ENCODE measurements at regions of chr1 and their contacts with region 1.

Region 1: GRCh38 chr1:235504496-235505222 is 407 bp upstream of the B3GALNT2 start:
- DNase-seq: peak; percentile 95 to 99 (median 98)
- ATAC-seq: peak; percentile 93
- H3K4me3 ChIP-seq: peak overlapping the region; percentile 93
- H3K4me3 Mint-ChIP-seq: peak overlapping the region; percentile 83 to 98 (median 96)
- H3K27ac ChIP-seq: peak overlapping the region; percentile 90
- H3K27ac Mint-ChIP-seq: peak overlapping the region; percentile 94 to 98 (median 97)
- H3K4me1 ChIP-seq: peaks cover 0 to 9% of the 10 kb centered on the region in 2 donors
- H3K4me1 Mint-ChIP-seq: peaks cover 4 to 28% (median 20%) of the 10 kb centered on the region in 7 donors
- H3K27me3 ChIP-seq: no peaks in the 10 kb centered on the region
- H3K27me3 Mint-ChIP-seq: peaks cover 0 to 9% (median 0%) of the 10 kb centered on the region in 5 donors

Region 2: DNA sequence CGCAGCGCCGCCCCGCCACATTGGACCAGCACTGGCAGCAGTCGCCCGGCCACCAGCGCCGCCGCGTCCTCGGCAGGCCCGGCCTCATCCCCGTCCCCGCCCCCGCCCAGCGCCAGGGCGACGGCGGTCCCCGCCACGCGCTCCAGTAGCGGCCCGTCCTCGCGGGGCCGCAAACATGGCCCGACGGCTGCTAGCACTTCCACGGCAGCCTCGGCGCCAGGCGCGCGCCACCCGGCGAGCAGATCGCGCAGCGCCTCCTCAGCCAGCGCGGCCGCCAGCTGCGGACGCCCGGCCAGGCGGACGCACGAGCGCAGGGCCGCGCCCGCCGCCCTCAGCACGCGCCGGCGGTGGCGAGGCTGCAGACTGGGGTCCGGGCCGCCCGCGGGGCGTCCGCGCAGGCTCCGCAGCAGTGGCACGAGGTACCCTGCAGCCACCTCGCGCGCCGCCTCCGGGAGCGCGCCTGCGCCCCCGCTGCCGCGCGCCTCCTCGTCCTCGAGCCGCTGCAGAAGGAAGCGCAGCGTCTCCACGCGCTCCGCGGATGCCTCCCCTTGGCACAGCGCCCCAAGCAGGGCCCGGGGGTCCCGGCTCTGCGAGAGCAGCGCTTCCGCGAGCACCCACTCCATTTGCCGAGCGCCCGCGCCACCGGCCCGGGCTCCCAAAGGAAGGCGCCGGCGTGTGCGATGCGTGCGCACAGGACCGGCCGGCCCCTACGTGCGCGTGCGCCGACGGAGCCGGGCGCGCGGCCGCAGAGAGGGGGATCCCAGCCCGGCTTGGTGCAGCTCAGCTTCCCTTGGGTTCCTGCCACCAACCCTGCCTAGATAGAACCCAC is 1026.0 kb before region 1 on chr1 and contains the start of gene TARBP1:
- CTCF ChIA-PET with region 1: no interaction called
- POLR2A ChIA-PET with region 1: interaction called, 4 read pairs
- intact Hi-C with region 1: loop called (anchors 2 kb)
- DNase-seq: peak; percentile 68 to 87 (median 83)
- ATAC-seq: peak; percentile 82
- H3K4me3 ChIP-seq: peak within 1 kb of the TSS; percentile 79
- H3K4me3 Mint-ChIP-seq: peak within 1 kb of the TSS; percentile 82 to 90 (median 90)
- H3K27ac ChIP-seq: peak within 1 kb of the TSS; percentile 75
- H3K27ac Mint-ChIP-seq: peak within 1 kb of the TSS; percentile 73 to 95 (median 85)
- H3K4me1 ChIP-seq: peaks cover 0 to 16% of the 10 kb centered on the region in 2 donors
- H3K4me1 Mint-ChIP-seq: peaks cover 14 to 44% (median 39%) of the 10 kb centered on the region in 7 donors
- H3K27me3 ChIP-seq: no peaks in the 10 kb centered on the region
- H3K27me3 Mint-ChIP-seq: peaks cover 0 to 19% (median 3%) of the 10 kb centered on the region in 5 donors
- total RNA-seq, gene TARBP1: 45.8 to 49.6 (median 47.5) TPM

Region 3: GRCh38 chr1:235100194-235100772 is 404.4 kb before region 1 on chr1:
- CTCF ChIA-PET with region 1: no interaction called
- POLR2A ChIA-PET with region 1: no interaction called
- intact Hi-C with region 1: loop called (anchors 5 kb)
- DNase-seq: peak in 1 of 9 donors; percentile 4
- ATAC-seq: no peak
- H3K4me3 ChIP-seq: no peak overlapping the region
- H3K4me3 Mint-ChIP-seq: no peak overlapping the region
- H3K27ac ChIP-seq: no peak overlapping the region
- H3K27ac Mint-ChIP-seq: no peak overlapping the region
- H3K4me1 ChIP-seq: peaks cover 16 to 21% of the 10 kb centered on the region in 2 donors
- H3K4me1 Mint-ChIP-seq: peaks cover 20 to 38% (median 33%) of the 10 kb centered on the region in 7 donors
- H3K27me3 ChIP-seq: no peaks in the 10 kb centered on the region
- H3K27me3 Mint-ChIP-seq: peaks cover 0 to 5% (median 0%) of the 10 kb centered on the region in 5 donors

Region 4: GRCh38 chr1:235253219-235253962 is 251.3 kb before region 1 on chr1:
- CTCF ChIA-PET with region 1: no interaction called
- POLR2A ChIA-PET with region 1: no interaction called
- intact Hi-C with region 1: loop called (anchors 5 kb)
- DNase-seq: peak; percentile 27 to 70 (median 63)
- ATAC-seq: peak; percentile 96
- H3K4me3 ChIP-seq: no peak overlapping the region
- H3K4me3 Mint-ChIP-seq: no peak overlapping the region
- H3K27ac ChIP-seq: no peak overlapping the region
- H3K27ac Mint-ChIP-seq: peak overlapping the region in 5 of 9 donors; percentile 16 to 65 (median 23)
- H3K4me1 ChIP-seq: peaks cover 0 to 5% of the 10 kb centered on the region in 2 donors
- H3K4me1 Mint-ChIP-seq: peaks cover 13 to 51% (median 41%) of the 10 kb centered on the region in 7 donors
- H3K27me3 ChIP-seq: no peaks in the 10 kb centered on the region
- H3K27me3 Mint-ChIP-seq: no peaks in the 10 kb centered on the region

Region 5: GRCh38 chr1:235404195-235404594 is 100.5 kb before region 1 on chr1:
- CTCF ChIA-PET with region 1: no interaction called
- POLR2A ChIA-PET with region 1: no interaction called
- intact Hi-C with region 1: no loop called
- DNase-seq: no peak
- ATAC-seq: no peak
- H3K4me3 ChIP-seq: no peak overlapping the region
- H3K4me3 Mint-ChIP-seq: no peak overlapping the region
- H3K27ac ChIP-seq: no peak overlapping the region
- H3K27ac Mint-ChIP-seq: no peak overlapping the region
- H3K4me1 ChIP-seq: no peaks in the 10 kb centered on the region
- H3K4me1 Mint-ChIP-seq: peaks cover 0 to 15% (median 9%) of the 10 kb centered on the region in 7 donors
- H3K27me3 ChIP-seq: no peaks in the 10 kb centered on the region
- H3K27me3 Mint-ChIP-seq: no peaks in the 10 kb centered on the region

Region 6: DNA sequence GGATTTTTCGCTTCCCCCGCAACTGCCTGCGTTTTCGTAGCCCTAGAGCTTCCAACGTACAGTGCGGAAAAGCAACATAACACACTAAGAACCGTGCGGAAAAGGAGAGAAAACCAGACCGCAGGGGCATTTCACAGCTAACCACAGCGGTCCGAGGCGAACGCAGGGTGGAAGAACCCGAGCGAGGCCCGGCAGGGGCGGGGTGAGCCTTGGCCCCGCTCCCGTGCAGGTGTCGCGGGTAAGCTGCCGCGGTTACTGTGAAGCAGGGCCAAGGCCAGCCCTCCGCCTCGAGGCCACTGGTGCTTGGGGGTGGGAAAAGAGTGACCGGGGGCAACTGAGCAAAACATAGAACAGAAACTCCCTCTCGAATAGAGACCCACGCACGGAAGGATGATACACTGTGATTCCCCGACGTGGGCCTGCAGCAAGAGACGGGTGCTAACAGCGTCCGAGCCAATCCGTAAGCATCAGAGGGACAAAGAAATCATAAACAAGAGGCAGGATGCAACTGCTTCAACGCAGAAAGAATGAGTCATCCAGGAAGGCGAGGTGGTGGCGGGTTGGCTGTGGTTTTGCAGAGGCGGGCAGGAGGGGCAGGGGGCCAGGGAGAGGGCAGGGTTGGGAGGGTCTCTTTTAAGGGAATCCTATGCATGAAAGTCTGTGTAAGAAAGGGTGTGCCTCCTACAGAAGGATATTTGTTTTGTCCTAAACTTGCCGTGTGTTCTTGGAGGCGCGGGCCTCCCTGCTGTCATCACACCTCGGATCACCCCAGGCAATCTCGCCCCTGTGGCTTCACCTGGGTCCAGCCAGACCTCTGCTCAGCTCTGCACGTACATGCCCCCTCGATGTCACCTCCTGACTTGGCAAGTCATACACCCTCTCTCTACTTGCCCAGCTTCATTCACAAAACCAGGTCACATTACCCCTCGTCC is 137.6 kb after region 1 on chr1:
- CTCF ChIA-PET with region 1: no interaction called
- POLR2A ChIA-PET with region 1: interaction called, 3 read pairs
- intact Hi-C with region 1: loop called (anchors 1 kb)
- DNase-seq: peak; percentile 20 to 88 (median 40)
- ATAC-seq: peak; percentile 86
- H3K4me3 ChIP-seq: peak overlapping the region; percentile 42
- H3K4me3 Mint-ChIP-seq: peak overlapping the region; percentile 57 to 90 (median 82)
- H3K27ac ChIP-seq: no peak overlapping the region
- H3K27ac Mint-ChIP-seq: peak overlapping the region; percentile 8 to 95 (median 79)
- H3K4me1 ChIP-seq: peaks cover 4 to 26% of the 10 kb centered on the region in 2 donors
- H3K4me1 Mint-ChIP-seq: peaks cover 15 to 57% (median 19%) of the 10 kb centered on the region in 7 donors
- H3K27me3 ChIP-seq: no peaks in the 10 kb centered on the region
- H3K27me3 Mint-ChIP-seq: peaks cover 19 to 33% (median 29%) of the 10 kb centered on the region in 5 donors

Region 7: GRCh38 chr1:236523701-236524141 is 1019.1 kb after region 1 on chr1 and contains the start of gene LGALS8:
- CTCF ChIA-PET with region 1: no interaction called
- POLR2A ChIA-PET with region 1: no interaction called
- intact Hi-C with region 1: loop called in 1 of 2 experiments (anchors 1 kb)
- DNase-seq: peak; percentile 68 to 87 (median 83)
- ATAC-seq: peak; percentile 90
- H3K4me3 ChIP-seq: peak within 1 kb of the TSS; percentile 70
- H3K4me3 Mint-ChIP-seq: peak within 1 kb of the TSS; percentile 93 to 100 (median 99)
- H3K27ac ChIP-seq: peak within 1 kb of the TSS; percentile 87
- H3K27ac Mint-ChIP-seq: peak within 1 kb of the TSS; percentile 97 to 99 (median 98)
- H3K4me1 ChIP-seq: peaks cover 4 to 5% of the 10 kb centered on the region in 2 donors
- H3K4me1 Mint-ChIP-seq: peaks cover 8 to 38% (median 35%) of the 10 kb centered on the region in 7 donors
- H3K27me3 ChIP-seq: no peaks in the 10 kb centered on the region
- H3K27me3 Mint-ChIP-seq: peaks cover 0 to 3% (median 0%) of the 10 kb centered on the region in 5 donors
- total RNA-seq, gene LGALS8: 114 to 143 (median 134) TPM